Activated naive CD8-positive, alpha-beta T cell treated with anti-CD3 and anti-CD28 coated beads, Interleukin-2, amount 10 ng/mL, durations not matched to agents 7 days and 5 days (primary cell): ENCODE measurements at regions of chr10 and their contacts with region 1.

Region 1: DNA sequence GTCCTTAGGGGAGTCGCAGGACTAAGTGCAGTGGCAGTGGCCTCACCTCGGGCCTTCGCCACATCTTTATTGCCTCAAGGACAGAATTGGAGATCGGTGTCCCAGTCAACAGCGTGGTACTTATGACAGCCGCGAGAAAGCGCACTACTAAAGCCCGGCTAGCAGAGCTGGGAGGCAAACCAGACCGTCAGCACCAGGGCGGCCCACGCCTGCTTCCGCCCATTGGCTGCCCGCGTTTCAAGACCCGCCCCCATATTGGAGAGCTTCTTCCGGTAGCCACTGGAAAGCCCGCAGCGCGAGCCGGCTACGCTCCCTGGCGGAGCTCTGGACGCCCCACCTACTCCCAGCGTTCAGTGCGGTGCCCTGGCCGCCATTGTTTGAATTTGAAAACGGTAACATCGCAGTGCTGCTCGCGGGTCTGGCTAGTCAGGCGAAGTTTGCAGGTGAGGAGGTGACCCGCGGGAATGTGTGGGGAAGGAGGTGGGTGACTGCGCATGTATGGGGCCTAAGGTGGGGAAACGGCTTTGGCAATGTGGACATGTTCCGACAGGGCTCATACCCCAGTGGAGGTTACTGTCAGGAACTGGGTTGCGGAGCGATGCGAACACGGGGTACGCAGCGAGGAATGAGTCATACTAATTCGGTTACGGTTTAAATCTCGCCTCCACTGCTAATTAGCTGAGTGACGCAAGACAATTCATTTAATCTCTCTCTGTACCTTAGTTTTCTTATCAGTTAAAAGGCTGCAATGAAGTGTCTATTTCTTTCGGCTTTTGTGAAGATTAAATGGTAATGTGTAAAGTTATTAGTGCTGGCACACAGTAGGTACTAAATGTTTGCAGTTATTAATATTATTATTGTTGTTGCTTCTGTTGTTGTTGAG is at the start of gene KIF20B:
- DNase-seq: peak; percentile 91
- ATAC-seq: peak; percentile 98
- H3K4me3 Mint-ChIP-seq: peak within 1 kb of the TSS; percentile 97
- H3K27ac Mint-ChIP-seq: peak within 1 kb of the TSS; percentile 99
- H3K4me1 Mint-ChIP-seq: peaks cover 34% of the 10 kb centered on the region
- H3K27me3 Mint-ChIP-seq: no peaks in the 10 kb centered on the region
- total RNA-seq, gene KIF20B: 56.4 to 58.1 TPM

Region 2: DNA sequence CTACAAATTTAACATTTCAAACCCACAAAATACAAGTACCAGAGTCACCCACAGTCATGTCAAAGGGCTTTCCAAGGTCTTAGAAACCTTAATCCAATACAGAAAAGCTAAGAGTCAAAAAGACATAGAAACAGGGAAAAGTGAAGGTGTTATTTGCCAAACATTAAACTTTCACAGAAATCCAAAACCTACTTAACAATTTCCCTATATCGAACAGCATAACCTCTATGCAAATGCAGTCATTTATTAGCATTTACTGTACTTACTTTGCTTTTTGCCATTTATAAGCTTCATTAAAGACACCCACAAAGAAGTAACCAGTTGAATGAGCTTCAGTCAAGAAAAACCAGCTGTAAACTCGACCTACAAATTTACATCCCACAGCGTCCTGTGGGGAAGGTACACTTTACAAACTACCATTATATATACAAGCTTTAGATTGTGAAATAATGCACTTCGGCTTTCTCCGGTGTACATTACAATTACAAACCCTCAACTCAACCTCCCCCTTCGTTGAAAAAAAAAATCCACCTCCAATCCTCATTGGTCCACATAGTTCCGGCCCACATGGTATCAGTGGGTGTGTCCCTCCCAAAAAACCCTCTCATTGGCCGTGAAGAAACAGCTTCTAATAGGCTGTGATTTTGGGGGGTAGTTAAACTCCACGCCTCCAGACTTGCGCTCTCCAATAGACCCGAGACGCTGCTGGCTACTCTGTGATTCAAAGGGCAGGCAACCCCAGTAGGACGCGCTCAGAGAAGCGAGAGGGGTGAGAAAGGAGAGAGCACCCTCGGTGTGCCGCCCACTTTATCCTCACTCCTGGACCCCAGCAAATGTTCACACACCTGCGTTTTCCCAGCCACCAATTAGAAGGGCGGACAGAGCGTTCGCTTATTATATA is 57.8 kb before region 1 on chr10:
- POLR2A ChIA-PET with region 1: interaction called, 19 read pairs
- DNase-seq: peak; percentile 70
- ATAC-seq: peak; percentile 91
- H3K4me3 Mint-ChIP-seq: no peak overlapping the region
- H3K27ac Mint-ChIP-seq: no peak overlapping the region
- H3K4me1 Mint-ChIP-seq: peaks cover 10% of the 10 kb centered on the region
- H3K27me3 Mint-ChIP-seq: peaks cover 24% of the 10 kb centered on the region

Region 3: GRCh38 chr10:89684604-89685003 is 16.9 kb before region 1 on chr10:
- POLR2A ChIA-PET with region 1: no interaction called
- DNase-seq: no peak
- ATAC-seq: no peak
- H3K4me3 Mint-ChIP-seq: no peak overlapping the region
- H3K27ac Mint-ChIP-seq: no peak overlapping the region
- H3K4me1 Mint-ChIP-seq: peaks cover 3% of the 10 kb centered on the region
- H3K27me3 Mint-ChIP-seq: peaks cover 35% of the 10 kb centered on the region

Region 4: GRCh38 chr10:89937494-89937893 is 236.0 kb after region 1 on chr10:
- POLR2A ChIA-PET with region 1: no interaction called
- DNase-seq: no peak
- ATAC-seq: no peak
- H3K4me3 Mint-ChIP-seq: no peak overlapping the region
- H3K27ac Mint-ChIP-seq: no peak overlapping the region
- H3K4me1 Mint-ChIP-seq: peaks cover 1% of the 10 kb centered on the region
- H3K27me3 Mint-ChIP-seq: no peaks in the 10 kb centered on the region